Endothelial cell of umbilical vein (primary cell): ENCODE measurements at regions of chr10 and their contacts with region 1.

Region 1: DNA sequence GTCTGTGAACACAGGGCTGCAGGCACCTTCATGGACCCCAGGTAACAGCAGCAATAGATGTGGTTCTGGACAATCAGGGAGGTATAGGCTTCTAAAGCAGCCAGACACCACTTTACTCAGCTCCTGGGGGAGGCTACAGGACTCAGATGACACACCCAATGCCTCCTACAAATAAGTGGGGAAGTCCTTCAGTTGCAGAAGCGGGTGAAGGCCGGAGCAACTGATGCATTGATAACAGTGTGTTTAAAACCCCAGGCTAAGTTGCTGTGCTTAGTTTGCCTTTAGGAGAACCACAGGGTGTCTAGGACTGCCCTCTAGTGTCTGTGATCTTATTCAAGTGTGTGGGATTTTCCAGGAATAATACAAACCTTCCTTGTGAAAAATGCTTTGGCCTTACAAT is 5.9 kb upstream of the ITGA8 start:
- DNase-seq: peak; percentile 49
- H3K4me3 ChIP-seq: no peak overlapping the region
- H3K27ac ChIP-seq: no peak overlapping the region
- H3K4me1 ChIP-seq: no peaks in the 10 kb centered on the region
- H3K27me3 ChIP-seq: peaks cover 17% of the 10 kb centered on the region in 2 experiments
- CTCF ChIP-seq: peak; percentile 51 to 60
- POLR2A ChIP-seq: no peak

Region 2: DNA sequence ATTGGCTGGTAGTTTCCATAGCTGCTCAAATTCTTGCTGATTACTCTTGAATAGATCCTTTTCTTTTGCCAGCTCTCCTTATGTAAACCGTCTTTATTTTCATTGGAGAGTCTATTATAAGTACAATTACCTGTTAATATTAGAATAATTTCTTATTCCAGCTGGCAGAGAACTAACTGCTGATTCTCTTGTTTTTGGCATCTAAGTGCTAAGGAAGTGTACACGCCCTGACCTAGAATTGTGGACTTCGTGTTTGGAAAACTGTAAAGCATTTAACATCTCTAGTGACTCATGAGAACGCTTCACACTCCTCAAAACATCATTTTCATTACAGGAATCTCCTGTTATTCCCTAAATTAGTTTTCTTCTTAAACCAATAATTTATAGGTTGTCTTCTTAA is 314.6 kb before region 1 on chr10:
- CTCF ChIA-PET with region 1: no interaction called
- POLR2A ChIA-PET with region 1: no interaction called
- dilution Hi-C with region 1: no loop called
- intact Hi-C with region 1: no loop called
- DNase-seq: peak; percentile 26
- H3K4me3 ChIP-seq: no peak overlapping the region
- H3K27ac ChIP-seq: no peak overlapping the region
- H3K4me1 ChIP-seq: no peaks in the 10 kb centered on the region
- H3K27me3 ChIP-seq: peaks cover 0 to 5% of the 10 kb centered on the region in 2 experiments
- CTCF ChIP-seq: no peak
- POLR2A ChIP-seq: no peak

Region 3: GRCh38 chr10:15427843-15428414 is 297.7 kb before region 1 on chr10:
- CTCF ChIA-PET with region 1: interaction called, 57 read pairs
- POLR2A ChIA-PET with region 1: no interaction called
- dilution Hi-C with region 1: no loop called
- intact Hi-C with region 1: no loop called
- DNase-seq: peak; percentile 67
- H3K4me3 ChIP-seq: no peak overlapping the region
- H3K27ac ChIP-seq: no peak overlapping the region
- H3K4me1 ChIP-seq: peaks cover 3% of the 10 kb centered on the region
- H3K27me3 ChIP-seq: peaks cover 0 to 2% of the 10 kb centered on the region in 2 experiments
- CTCF ChIP-seq: peak; percentile 33 to 36
- POLR2A ChIP-seq: no peak

Region 4: DNA sequence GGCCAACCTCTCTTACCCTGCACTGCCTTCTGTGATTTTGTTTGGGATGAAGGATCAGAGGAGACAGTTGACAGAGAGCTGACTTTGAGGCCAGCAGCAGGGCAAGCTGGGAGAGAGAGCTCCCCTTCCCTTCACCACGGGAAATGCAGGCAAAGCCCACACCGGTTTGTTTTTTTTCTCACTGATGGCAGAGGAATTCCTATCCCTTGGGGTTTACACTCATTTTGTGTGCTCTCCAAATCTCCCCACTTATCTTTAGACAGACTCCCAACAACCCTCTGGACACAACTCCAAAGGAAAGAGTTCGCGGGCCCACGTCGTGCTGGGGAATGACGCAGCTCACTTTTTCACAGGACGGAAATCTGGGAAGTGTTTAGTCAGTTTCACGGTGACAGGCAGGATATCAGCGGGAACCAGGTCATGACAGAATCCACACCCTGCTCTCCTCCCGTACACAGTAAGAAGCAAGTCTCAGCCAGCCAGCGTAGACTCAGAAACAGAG is 286.2 kb before region 1 on chr10:
- CTCF ChIA-PET with region 1: interaction called, 42 read pairs
- POLR2A ChIA-PET with region 1: no interaction called
- dilution Hi-C with region 1: no loop called
- intact Hi-C with region 1: loop called (anchors 1 kb)
- DNase-seq: peak; percentile 62
- H3K4me3 ChIP-seq: peak overlapping the region in 2 of 3 experiments; percentile 1 to 18
- H3K27ac ChIP-seq: peak overlapping the region; percentile 25
- H3K4me1 ChIP-seq: peaks cover 13% of the 10 kb centered on the region
- H3K27me3 ChIP-seq: peaks cover 0 to 3% of the 10 kb centered on the region in 2 experiments
- CTCF ChIP-seq: peak; percentile 41 to 59
- POLR2A ChIP-seq: no peak

Region 5: GRCh38 chr10:15461353-15462108 is 264.1 kb before region 1 on chr10:
- CTCF ChIA-PET with region 1: interaction called, 4 read pairs
- POLR2A ChIA-PET with region 1: no interaction called
- dilution Hi-C with region 1: no loop called
- intact Hi-C with region 1: loop called (anchors 1 kb)
- DNase-seq: peak; percentile 22
- H3K4me3 ChIP-seq: no peak overlapping the region
- H3K27ac ChIP-seq: no peak overlapping the region
- H3K4me1 ChIP-seq: peaks cover 4% of the 10 kb centered on the region
- H3K27me3 ChIP-seq: peaks cover 0 to 2% of the 10 kb centered on the region in 2 experiments
- CTCF ChIP-seq: peak; percentile 15 to 18
- POLR2A ChIP-seq: no peak

Region 6: GRCh38 chr10:15585303-15585715 is 140.3 kb before region 1 on chr10:
- CTCF ChIA-PET with region 1: interaction called, 29 read pairs
- POLR2A ChIA-PET with region 1: no interaction called
- dilution Hi-C with region 1: no loop called
- intact Hi-C with region 1: loop called (anchors 2 kb)
- DNase-seq: peak; percentile 80
- H3K4me3 ChIP-seq: no peak overlapping the region
- H3K27ac ChIP-seq: no peak overlapping the region
- H3K4me1 ChIP-seq: peaks cover 9% of the 10 kb centered on the region
- H3K27me3 ChIP-seq: no peaks in the 10 kb centered on the region
- CTCF ChIP-seq: peak; percentile 89 to 93
- POLR2A ChIP-seq: no peak

Region 7: DNA sequence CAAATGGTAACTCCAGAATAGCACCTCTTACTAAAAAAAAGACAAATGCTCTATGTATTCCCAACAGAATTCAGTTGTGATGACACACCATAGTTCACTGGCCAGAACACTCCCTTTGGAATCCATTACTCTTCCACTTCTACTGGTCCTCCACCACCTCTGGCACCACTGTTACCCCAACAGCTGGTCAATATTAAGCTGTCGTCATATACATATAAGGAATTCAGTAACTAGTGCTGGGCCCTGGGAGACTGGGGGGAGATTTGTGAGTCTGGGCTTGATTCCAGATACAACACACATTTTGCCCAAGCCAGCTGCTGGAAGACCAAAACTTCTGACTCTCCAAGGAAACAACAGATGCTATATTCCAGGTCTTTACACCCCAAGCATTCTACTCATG is 20.1 kb after region 1 on chr10:
- CTCF ChIA-PET with region 1: no interaction called
- POLR2A ChIA-PET with region 1: no interaction called
- dilution Hi-C with region 1: no loop called
- intact Hi-C with region 1: no loop called
- DNase-seq: no peak
- H3K4me3 ChIP-seq: no peak overlapping the region
- H3K27ac ChIP-seq: no peak overlapping the region
- H3K4me1 ChIP-seq: no peaks in the 10 kb centered on the region
- H3K27me3 ChIP-seq: peaks cover 7 to 11% of the 10 kb centered on the region in 2 experiments
- CTCF ChIP-seq: no peak
- POLR2A ChIP-seq: no peak

Region 8: DNA sequence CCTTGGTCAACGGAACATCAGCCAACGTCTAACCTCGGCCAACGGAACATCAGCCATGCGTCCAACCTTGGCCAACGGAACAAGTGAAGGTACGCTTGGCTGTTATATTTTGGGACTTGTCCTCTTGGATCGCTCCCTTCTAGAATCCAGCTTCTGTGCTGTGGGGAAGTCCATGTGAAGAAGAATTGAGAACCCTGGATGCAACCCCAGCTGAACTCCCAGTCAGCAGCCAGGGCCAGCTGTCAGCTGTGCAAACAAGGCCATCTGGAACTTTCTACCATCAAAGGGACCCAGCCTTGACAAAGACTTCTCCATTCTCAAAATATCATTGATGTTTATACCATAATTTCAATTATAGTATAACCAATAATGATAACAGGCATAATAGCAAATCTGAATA is 37.4 kb after region 1 on chr10:
- CTCF ChIA-PET with region 1: no interaction called
- POLR2A ChIA-PET with region 1: no interaction called
- dilution Hi-C with region 1: no loop called
- intact Hi-C with region 1: no loop called
- DNase-seq: no peak
- H3K4me3 ChIP-seq: no peak overlapping the region
- H3K27ac ChIP-seq: no peak overlapping the region
- H3K4me1 ChIP-seq: no peaks in the 10 kb centered on the region
- H3K27me3 ChIP-seq: peaks cover 2 to 7% of the 10 kb centered on the region in 2 experiments
- CTCF ChIP-seq: no peak
- POLR2A ChIP-seq: no peak

Region 9: GRCh38 chr10:15780353-15781135 is 54.9 kb after region 1 on chr10:
- CTCF ChIA-PET with region 1: no interaction called
- POLR2A ChIA-PET with region 1: no interaction called
- dilution Hi-C with region 1: no loop called
- intact Hi-C with region 1: no loop called
- DNase-seq: peak; percentile 12
- H3K4me3 ChIP-seq: no peak overlapping the region
- H3K27ac ChIP-seq: no peak overlapping the region
- H3K4me1 ChIP-seq: peaks cover 5% of the 10 kb centered on the region
- H3K27me3 ChIP-seq: no peaks in the 10 kb centered on the region
- CTCF ChIP-seq: no peak
- POLR2A ChIP-seq: no peak